ENCODE measurements at regions of chrX and their contacts with region 1.

Region 1: GRCh38 chrX:48025561-48025960 is 18.8 kb downstream of the SPACA5 start:
- DNase-seq: peak; percentile 52
- H3K4me3 Mint-ChIP-seq: no peak overlapping the region
- H3K27ac Mint-ChIP-seq: peak overlapping the region; percentile 19
- H3K4me1 Mint-ChIP-seq: peaks cover 21% of the 10 kb centered on the region
- H3K27me3 Mint-ChIP-seq: no peaks in the 10 kb centered on the region

Region 2: DNA sequence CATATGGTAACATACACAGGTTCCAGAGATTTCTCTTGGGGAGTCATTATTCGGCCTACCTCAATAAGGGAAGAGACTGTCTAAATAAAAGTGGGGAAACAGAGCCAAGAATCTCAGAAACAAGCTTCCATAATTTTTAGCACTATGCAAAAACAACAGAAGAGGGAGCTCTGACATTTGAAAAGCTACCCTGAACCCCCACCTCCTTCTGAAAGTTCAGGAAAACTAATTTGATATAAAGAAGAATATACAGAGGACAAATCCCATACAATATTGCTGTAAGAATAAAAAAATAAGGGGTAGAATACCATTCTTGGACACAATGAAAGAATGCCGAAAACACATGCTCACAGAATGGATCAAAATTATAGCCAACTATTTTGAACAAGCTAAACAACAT is 528.3 kb before region 1 on chrX:
- CTCF ChIA-PET with region 1: no interaction called
- DNase-seq: no peak
- H3K4me3 Mint-ChIP-seq: no peak overlapping the region
- H3K27ac Mint-ChIP-seq: no peak overlapping the region
- H3K4me1 Mint-ChIP-seq: peaks cover 16% of the 10 kb centered on the region
- H3K27me3 Mint-ChIP-seq: no peaks in the 10 kb centered on the region

Region 3: GRCh38 chrX:47831788-47832187 is 193.8 kb before region 1 on chrX:
- CTCF ChIA-PET with region 1: interaction called, 27 read pairs
- DNase-seq: peak; percentile 65
- H3K4me3 Mint-ChIP-seq: no peak overlapping the region
- H3K27ac Mint-ChIP-seq: no peak overlapping the region
- H3K4me1 Mint-ChIP-seq: peaks cover 11% of the 10 kb centered on the region
- H3K27me3 Mint-ChIP-seq: peaks cover 4% of the 10 kb centered on the region

Region 4: DNA sequence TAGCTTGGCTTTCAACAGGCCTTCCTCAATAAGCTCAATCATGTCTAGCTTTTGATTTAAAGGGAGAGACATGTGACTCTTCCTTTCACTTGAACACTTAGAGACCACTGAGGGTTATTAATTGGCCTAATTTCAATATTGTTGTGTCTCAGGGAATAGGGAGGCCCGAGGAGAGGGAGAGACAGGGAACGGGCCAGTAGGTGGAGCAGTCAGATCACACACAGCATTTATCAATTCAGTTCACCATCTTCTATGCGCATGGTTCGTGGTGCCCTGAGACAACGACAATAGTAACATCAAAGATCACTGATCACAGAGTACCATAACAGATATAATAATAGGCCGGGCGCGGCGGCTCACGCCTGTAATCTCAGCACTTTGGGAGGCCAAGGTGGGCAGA is 171.1 kb before region 1 on chrX:
- CTCF ChIA-PET with region 1: interaction called, 16 read pairs
- DNase-seq: peak; percentile 57
- H3K4me3 Mint-ChIP-seq: no peak overlapping the region
- H3K27ac Mint-ChIP-seq: no peak overlapping the region
- H3K4me1 Mint-ChIP-seq: peaks cover 10% of the 10 kb centered on the region
- H3K27me3 Mint-ChIP-seq: no peaks in the 10 kb centered on the region